Testis (tissue), 5 donors: ENCODE measurements at regions of chr1 and their contacts with region 1.

Region 1: GRCh38 chr1:18875107-18875795 is 15.8 kb upstream of the TAS1R2 start:
- DNase-seq: peak; percentile 94
- H3K4me3 ChIP-seq: no peak overlapping the region
- H3K27ac ChIP-seq: no peak overlapping the region
- H3K4me1 ChIP-seq: no peaks in the 10 kb centered on the region
- H3K27me3 ChIP-seq: no peaks in the 10 kb centered on the region
- CTCF ChIP-seq: peak; percentile 58 to 75 (median 74)
- POLR2A ChIP-seq: no peak

Region 2: DNA sequence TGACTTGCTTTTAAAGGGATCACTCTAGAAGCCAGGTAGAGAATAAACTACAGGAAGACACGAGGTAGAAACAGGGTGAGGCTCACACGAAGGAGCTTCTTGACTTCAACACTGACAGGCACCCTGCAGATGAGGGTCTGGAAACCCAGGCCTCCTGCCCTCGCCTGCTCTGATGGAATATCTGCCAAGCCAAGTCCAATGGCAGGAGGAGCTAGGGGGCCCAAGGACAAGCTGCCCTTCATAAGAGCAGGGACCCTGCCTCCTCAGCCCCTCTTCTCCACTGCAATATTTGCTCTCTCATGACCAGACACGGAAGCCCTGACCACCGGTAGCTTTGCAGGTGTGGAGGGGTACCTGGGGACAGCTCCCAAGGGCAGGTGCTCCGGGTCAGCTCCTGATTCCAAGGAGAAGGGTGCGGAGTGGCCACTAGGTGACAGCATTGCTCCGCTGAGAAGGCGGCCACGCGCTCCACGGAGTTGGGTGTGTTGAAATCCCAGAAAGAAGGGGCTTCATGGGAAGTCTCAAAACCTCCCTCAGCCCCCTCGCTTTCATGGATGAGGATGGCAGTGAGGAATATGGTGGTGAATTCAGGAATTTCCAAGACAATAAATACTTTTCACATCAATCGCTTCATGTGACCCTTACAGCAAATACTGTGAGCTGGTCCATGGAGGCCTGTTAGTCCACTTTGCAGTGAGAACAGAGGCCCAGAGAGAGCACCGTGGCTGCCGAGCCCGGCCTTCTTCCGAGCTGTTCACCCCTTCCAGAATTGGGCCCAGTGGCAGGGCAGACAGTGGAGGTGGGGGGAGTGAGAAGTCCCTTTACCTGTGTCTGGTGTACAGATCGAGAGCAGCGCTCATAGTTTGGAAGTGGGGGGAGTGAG is 277.9 kb before region 1 on chr1:
- intact Hi-C with region 1: loop called (anchors 5 kb)
- DNase-seq: peak; percentile 69
- H3K4me3 ChIP-seq: no peak overlapping the region
- H3K27ac ChIP-seq: no peak overlapping the region
- H3K4me1 ChIP-seq: no peaks in the 10 kb centered on the region
- H3K27me3 ChIP-seq: no peaks in the 10 kb centered on the region
- CTCF ChIP-seq: peak; percentile 73 to 95 (median 88)
- POLR2A ChIP-seq: no peak

Region 3: GRCh38 chr1:19468397-19468956 is 593.2 kb after region 1 on chr1:
- intact Hi-C with region 1: no loop called
- DNase-seq: no peak
- H3K4me3 ChIP-seq: no peak overlapping the region
- H3K27ac ChIP-seq: peak overlapping the region; percentile 20 to 21
- H3K4me1 ChIP-seq: peaks cover 39% of the 10 kb centered on the region
- H3K27me3 ChIP-seq: no peaks in the 10 kb centered on the region
- CTCF ChIP-seq: no peak
- POLR2A ChIP-seq: no peak